CD4-positive, alpha-beta memory T cell (primary cell): ENCODE measurements at regions of chr3 and their contacts with region 1.

Region 1: GRCh38 chr3:153768561-153769469 is 352.4 kb upstream of the ARHGEF26 start:
- DNase-seq: peak; percentile 52 to 65 (median 62)
- H3K4me3 ChIP-seq: no peak overlapping the region
- H3K4me3 Mint-ChIP-seq: no peak overlapping the region
- H3K27ac ChIP-seq: no peak overlapping the region
- H3K27ac Mint-ChIP-seq: no peak overlapping the region
- H3K4me1 ChIP-seq: no peaks in the 10 kb centered on the region
- H3K4me1 Mint-ChIP-seq: peaks cover 0 to 5% (median 3%) of the 10 kb centered on the region in 4 donors
- H3K27me3 ChIP-seq: no peaks in the 10 kb centered on the region
- H3K27me3 Mint-ChIP-seq: peaks cover 2 to 4% of the 10 kb centered on the region in 2 donors

Region 2: DNA sequence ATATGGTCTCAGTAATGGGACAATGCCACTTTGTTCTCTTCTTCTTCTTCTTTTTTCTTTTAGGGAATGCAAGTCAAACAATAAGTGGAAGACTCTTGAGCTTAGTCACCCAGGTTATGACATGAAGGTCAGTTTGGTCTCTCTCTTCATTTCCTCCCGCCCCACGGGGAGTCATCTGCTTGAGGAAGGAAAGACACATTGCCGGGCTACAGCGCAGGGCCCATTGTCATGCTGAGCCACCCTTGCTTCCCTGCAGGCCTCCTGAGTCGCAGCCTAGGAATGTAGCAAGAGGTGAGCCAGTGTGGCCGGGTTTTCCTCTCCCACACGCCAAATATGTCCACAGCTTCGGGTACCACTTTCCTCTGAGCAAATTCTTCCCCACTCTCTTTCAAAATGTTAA is 559.2 kb before region 1 on chr3:
- CTCF ChIA-PET with region 1: interaction called, 11 read pairs
- POLR2A ChIA-PET with region 1: no interaction called
- intact Hi-C with region 1: loop called (anchors 1 kb)
- DNase-seq: no peak
- H3K4me3 ChIP-seq: no peak overlapping the region
- H3K4me3 Mint-ChIP-seq: peak overlapping the region in 6 of 8 donors; percentile 59 to 80 (median 72)
- H3K27ac ChIP-seq: no peak overlapping the region
- H3K27ac Mint-ChIP-seq: peak overlapping the region in 5 of 7 donors; percentile 54 to 85 (median 72)
- H3K4me1 ChIP-seq: peaks cover 20% of the 10 kb centered on the region
- H3K4me1 Mint-ChIP-seq: peaks cover 26 to 42% (median 33%) of the 10 kb centered on the region in 4 donors
- H3K27me3 ChIP-seq: no peaks in the 10 kb centered on the region
- H3K27me3 Mint-ChIP-seq: no peaks in the 10 kb centered on the region

Region 3: DNA sequence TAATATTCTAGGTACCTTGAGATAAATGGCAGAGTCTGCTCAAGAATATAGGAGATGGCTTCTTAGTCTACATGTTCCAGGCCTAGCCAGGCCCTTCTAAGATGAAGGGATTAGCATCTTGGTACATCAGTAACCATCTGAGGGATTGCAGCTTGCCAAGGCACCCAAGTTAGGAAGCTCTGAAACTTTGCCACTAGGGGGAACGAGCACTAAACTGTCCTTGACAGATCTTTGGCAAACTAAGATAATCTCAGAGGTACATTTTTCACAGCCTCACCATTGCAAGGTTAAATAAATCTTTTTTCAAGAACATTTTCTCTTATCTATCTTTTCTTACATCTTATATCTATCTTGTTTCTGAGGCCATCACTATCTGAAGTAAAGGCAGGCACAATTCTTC is 255.6 kb before region 1 on chr3:
- CTCF ChIA-PET with region 1: interaction called, 28 read pairs
- POLR2A ChIA-PET with region 1: no interaction called
- intact Hi-C with region 1: loop called (anchors 1 kb)
- DNase-seq: peak in 4 of 5 donors; percentile 12 to 20 (median 12)
- H3K4me3 ChIP-seq: no peak overlapping the region
- H3K4me3 Mint-ChIP-seq: no peak overlapping the region
- H3K27ac ChIP-seq: no peak overlapping the region
- H3K27ac Mint-ChIP-seq: no peak overlapping the region
- H3K4me1 ChIP-seq: no peaks in the 10 kb centered on the region
- H3K4me1 Mint-ChIP-seq: peaks cover 0 to 4% (median 1%) of the 10 kb centered on the region in 4 donors
- H3K27me3 ChIP-seq: no peaks in the 10 kb centered on the region
- H3K27me3 Mint-ChIP-seq: peaks cover 0 to 2% of the 10 kb centered on the region in 2 donors

Region 4: GRCh38 chr3:153752405-153753027 is 16.3 kb before region 1 on chr3:
- CTCF ChIA-PET with region 1: interaction called, 16 read pairs
- POLR2A ChIA-PET with region 1: interaction called, 3 read pairs
- intact Hi-C with region 1: no loop called
- DNase-seq: no peak
- H3K4me3 ChIP-seq: no peak overlapping the region
- H3K4me3 Mint-ChIP-seq: no peak overlapping the region
- H3K27ac ChIP-seq: no peak overlapping the region
- H3K27ac Mint-ChIP-seq: peak overlapping the region in 1 of 7 donors; percentile 5
- H3K4me1 ChIP-seq: no peaks in the 10 kb centered on the region
- H3K4me1 Mint-ChIP-seq: no peaks in the 10 kb centered on the region
- H3K27me3 ChIP-seq: no peaks in the 10 kb centered on the region
- H3K27me3 Mint-ChIP-seq: peaks cover 1 to 2% of the 10 kb centered on the region in 2 donors

Region 5: DNA sequence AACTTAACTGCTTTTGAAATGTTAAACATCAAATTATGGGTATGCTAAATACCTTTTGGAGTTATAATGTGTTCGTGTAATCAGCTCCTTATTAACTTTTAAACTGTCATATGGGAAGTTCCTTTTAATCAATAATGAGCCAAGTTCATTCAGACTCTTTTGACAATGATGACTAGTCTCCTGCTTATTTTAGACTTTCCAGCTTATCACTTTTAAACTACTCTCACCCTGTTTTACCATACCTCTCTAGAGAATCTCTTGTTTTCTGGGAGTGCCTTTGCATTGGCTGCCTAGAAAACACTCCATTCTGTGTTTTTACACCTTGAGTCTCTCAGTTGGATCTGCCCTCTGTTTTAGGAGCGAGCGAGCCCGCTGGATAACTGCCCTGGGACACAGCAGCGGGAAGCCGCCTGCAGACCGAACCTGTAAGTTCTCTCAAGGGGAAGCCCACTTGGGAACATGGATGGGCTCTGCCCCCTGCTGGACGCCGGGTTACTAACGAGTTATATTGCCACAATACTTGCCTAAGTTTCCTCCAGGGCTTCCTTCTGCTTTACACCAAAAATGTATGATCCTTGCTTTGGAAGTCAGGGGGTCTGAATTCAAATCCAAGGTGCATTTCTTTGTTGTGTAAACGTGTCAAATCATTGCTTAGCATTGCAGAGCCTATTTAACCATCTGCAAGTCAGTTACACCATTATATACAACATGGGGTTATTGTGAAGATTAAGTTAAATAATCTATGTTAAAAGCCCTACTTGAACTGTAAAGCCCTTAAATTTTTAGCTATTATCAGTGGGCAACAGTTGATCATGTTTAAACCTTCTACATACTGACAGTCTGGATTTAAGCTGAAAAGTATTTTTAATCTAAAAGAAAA is 484.2 kb after region 1 on chr3:
- CTCF ChIA-PET with region 1: interaction called, 3 read pairs
- POLR2A ChIA-PET with region 1: no interaction called
- intact Hi-C with region 1: loop called (anchors 1 kb)
- DNase-seq: peak; percentile 32 to 66 (median 38)
- H3K4me3 ChIP-seq: no peak overlapping the region
- H3K4me3 Mint-ChIP-seq: no peak overlapping the region
- H3K27ac ChIP-seq: no peak overlapping the region
- H3K27ac Mint-ChIP-seq: peak overlapping the region in 4 of 7 donors; percentile 2 to 52 (median 38)
- H3K4me1 ChIP-seq: no peaks in the 10 kb centered on the region
- H3K4me1 Mint-ChIP-seq: peaks cover 0 to 4% (median 1%) of the 10 kb centered on the region in 4 donors
- H3K27me3 ChIP-seq: no peaks in the 10 kb centered on the region
- H3K27me3 Mint-ChIP-seq: no peaks in the 10 kb centered on the region